ENCODE measurements at regions of chr17 and their contacts with region 1.

Region 1: GRCh38 chr17:70168977-70169708 is at the start of gene KCNJ2:
- DNase-seq: peak; percentile 67
- H3K4me3 Mint-ChIP-seq: peak within 1 kb of the TSS; percentile 81
- H3K27ac Mint-ChIP-seq: no peak within 1 kb of the TSS
- H3K4me1 Mint-ChIP-seq: peaks cover 11% of the 10 kb centered on the region
- H3K27me3 Mint-ChIP-seq: peaks cover 58% of the 10 kb centered on the region
- total RNA-seq, gene KCNJ2: 0.11 TPM in 1 of 2 replicates, not detected in the other

Region 2: GRCh38 chr17:69567130-69567529 is 602.0 kb before region 1 on chr17:
- intact Hi-C with region 1: loop called (anchors 5 kb)
- DNase-seq: no peak
- H3K4me3 Mint-ChIP-seq: no peak overlapping the region
- H3K27ac Mint-ChIP-seq: no peak overlapping the region
- H3K4me1 Mint-ChIP-seq: peaks cover 3% of the 10 kb centered on the region
- H3K27me3 Mint-ChIP-seq: peaks cover 1% of the 10 kb centered on the region

Region 3: DNA sequence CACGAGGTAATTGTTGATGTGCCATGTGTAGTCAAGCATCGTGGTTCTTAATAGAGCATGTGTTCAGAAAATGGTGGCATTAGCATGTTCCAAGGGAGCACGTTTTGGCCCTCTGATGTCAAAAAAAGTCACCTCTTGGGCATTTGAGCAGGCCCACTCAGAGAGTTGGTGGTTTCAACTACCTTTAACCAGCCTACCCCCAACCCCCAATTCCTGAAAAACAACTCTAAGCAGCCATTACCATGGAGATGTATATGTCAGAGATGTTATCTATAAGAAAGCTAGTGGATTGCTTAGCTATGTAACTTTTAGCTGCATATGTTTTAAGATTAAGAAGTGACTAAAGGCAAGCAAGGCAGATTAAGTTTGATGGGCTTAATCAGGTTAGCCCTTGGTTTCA is 509.2 kb before region 1 on chr17:
- intact Hi-C with region 1: no loop called
- DNase-seq: no peak
- H3K4me3 Mint-ChIP-seq: no peak overlapping the region
- H3K27ac Mint-ChIP-seq: no peak overlapping the region
- H3K4me1 Mint-ChIP-seq: no peaks in the 10 kb centered on the region
- H3K27me3 Mint-ChIP-seq: no peaks in the 10 kb centered on the region

Measured in activated T-helper 2 cell treated with anti-CD3 and anti-CD28 coated beads, Interferon-gamma antibody, Interleukin-2, Interleukin-4, amounts not matched to agents 10 μg/mL and 5 μg/mL and 100 μg/mL, durations not matched to agents 14 hours and 24 hours and 36 hours (primary cell).